ENCODE measurements at regions of chr6 and their contacts with region 1.

Region 1: DNA sequence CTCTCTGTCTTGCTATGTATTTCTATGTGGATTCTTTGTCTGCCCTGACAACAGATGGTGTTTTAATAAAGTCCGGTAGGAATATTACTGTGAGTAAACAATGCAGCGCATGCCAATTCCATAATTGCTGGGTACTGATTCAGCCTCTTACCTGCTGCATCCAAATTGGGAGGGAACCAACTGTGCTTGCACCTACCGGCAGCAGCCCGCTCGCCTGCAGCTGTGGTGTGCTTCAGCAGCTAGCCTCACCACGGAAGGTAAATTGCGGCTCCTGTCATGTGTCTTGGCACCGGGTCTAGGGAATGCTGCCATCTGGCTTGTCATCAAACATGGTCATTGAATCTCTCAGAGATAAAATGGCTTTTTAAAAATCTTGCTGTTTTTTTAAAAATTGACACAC is 704.8 kb upstream of the SLC35B3 start:
- DNase-seq: peak; percentile 74
- H3K4me3 Mint-ChIP-seq: peak overlapping the region; percentile 54
- H3K27ac Mint-ChIP-seq: peak overlapping the region; percentile 76
- H3K4me1 Mint-ChIP-seq: peaks cover 40% of the 10 kb centered on the region
- H3K27me3 Mint-ChIP-seq: no peaks in the 10 kb centered on the region
- CTCF ChIP-seq: no peak

Region 2: GRCh38 chr6:9126878-9127560 is 13.2 kb before region 1 on chr6:
- CTCF ChIA-PET with region 1: interaction called, 4 read pairs
- POLR2A ChIA-PET with region 1: interaction called, 43 read pairs
- intact Hi-C with region 1: no loop called
- DNase-seq: peak; percentile 90
- H3K4me3 Mint-ChIP-seq: no peak overlapping the region
- H3K27ac Mint-ChIP-seq: no peak overlapping the region
- H3K4me1 Mint-ChIP-seq: peaks cover 9% of the 10 kb centered on the region
- H3K27me3 Mint-ChIP-seq: no peaks in the 10 kb centered on the region
- CTCF ChIP-seq: no peak

Region 3: GRCh38 chr6:9178071-9178470 is 37.9 kb after region 1 on chr6:
- CTCF ChIA-PET with region 1: no interaction called
- POLR2A ChIA-PET with region 1: no interaction called
- intact Hi-C with region 1: no loop called
- DNase-seq: no peak
- H3K4me3 Mint-ChIP-seq: no peak overlapping the region
- H3K27ac Mint-ChIP-seq: no peak overlapping the region
- H3K4me1 Mint-ChIP-seq: no peaks in the 10 kb centered on the region
- H3K27me3 Mint-ChIP-seq: no peaks in the 10 kb centered on the region
- CTCF ChIP-seq: no peak

Region 4: GRCh38 chr6:9225441-9225871 is 85.3 kb after region 1 on chr6:
- CTCF ChIA-PET with region 1: no interaction called
- POLR2A ChIA-PET with region 1: interaction called, 18 read pairs
- intact Hi-C with region 1: no loop called
- DNase-seq: no peak
- H3K4me3 Mint-ChIP-seq: peak overlapping the region; percentile 29
- H3K27ac Mint-ChIP-seq: peak overlapping the region; percentile 71
- H3K4me1 Mint-ChIP-seq: peaks cover 19% of the 10 kb centered on the region
- H3K27me3 Mint-ChIP-seq: no peaks in the 10 kb centered on the region
- CTCF ChIP-seq: no peak

Region 5: DNA sequence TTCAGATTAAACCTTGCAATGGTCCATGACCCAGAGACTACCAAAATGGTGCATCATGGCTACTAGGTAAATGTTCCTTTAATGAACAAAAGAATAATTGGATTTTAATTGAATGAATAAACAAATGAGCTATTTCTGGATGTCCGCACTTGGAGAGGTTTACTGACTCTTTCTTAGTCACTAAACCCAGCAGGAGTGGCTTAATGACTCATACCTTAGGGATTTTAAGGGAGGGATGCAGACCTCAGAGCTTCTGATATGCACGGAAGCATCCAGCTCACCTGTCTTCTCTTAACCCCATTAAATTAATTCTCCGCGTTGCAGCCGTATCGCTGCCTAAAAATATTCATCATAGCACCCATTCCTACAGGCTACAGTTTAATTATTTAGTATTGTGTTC is 265.2 kb after region 1 on chr6:
- CTCF ChIA-PET with region 1: no interaction called
- POLR2A ChIA-PET with region 1: no interaction called
- intact Hi-C with region 1: no loop called
- DNase-seq: peak; percentile 79
- H3K4me3 Mint-ChIP-seq: no peak overlapping the region
- H3K27ac Mint-ChIP-seq: no peak overlapping the region
- H3K4me1 Mint-ChIP-seq: peaks cover 17% of the 10 kb centered on the region
- H3K27me3 Mint-ChIP-seq: no peaks in the 10 kb centered on the region
- CTCF ChIP-seq: no peak